Naive thymus-derived CD4-positive, alpha-beta T cell (primary cell): ENCODE measurements at regions of chr2 and their contacts with region 1.

Region 1: GRCh38 chr2:61789807-61790602 is 63.9 kb downstream of the FAM161A start:
- DNase-seq: no peak
- ATAC-seq: no peak
- H3K4me3 ChIP-seq: no peak overlapping the region
- H3K4me3 Mint-ChIP-seq: no peak overlapping the region
- H3K27ac ChIP-seq: no peak overlapping the region
- H3K27ac Mint-ChIP-seq: no peak overlapping the region
- H3K4me1 ChIP-seq: no peaks in the 10 kb centered on the region
- H3K4me1 Mint-ChIP-seq: peaks cover 0 to 8% (median 4%) of the 10 kb centered on the region in 7 donors
- H3K27me3 ChIP-seq: no peaks in the 10 kb centered on the region
- H3K27me3 Mint-ChIP-seq: peaks cover 3 to 17% (median 7%) of the 10 kb centered on the region in 5 donors

Region 2: GRCh38 chr2:61288070-61288841 is 501.7 kb before region 1 on chr2:
- CTCF ChIA-PET with region 1: no interaction called
- POLR2A ChIA-PET with region 1: no interaction called
- intact Hi-C with region 1: loop called in 1 of 2 experiments (anchors 5 kb)
- DNase-seq: no peak
- ATAC-seq: peak; percentile 52
- H3K4me3 ChIP-seq: no peak overlapping the region
- H3K4me3 Mint-ChIP-seq: no peak overlapping the region
- H3K27ac ChIP-seq: no peak overlapping the region
- H3K27ac Mint-ChIP-seq: peak overlapping the region in 3 of 9 donors; percentile 14 to 41 (median 21)
- H3K4me1 ChIP-seq: no peaks in the 10 kb centered on the region
- H3K4me1 Mint-ChIP-seq: peaks cover 0 to 11% (median 8%) of the 10 kb centered on the region in 7 donors
- H3K27me3 ChIP-seq: no peaks in the 10 kb centered on the region
- H3K27me3 Mint-ChIP-seq: no peaks in the 10 kb centered on the region